ENCODE measurements at regions of chr14 and their contacts with region 1.

Region 1: GRCh38 chr14:55579724-55580469 is at the start of gene KTN1:
- DNase-seq: peak; percentile 77 to 90 (median 88)
- ATAC-seq: peak; percentile 94
- H3K4me3 ChIP-seq: peak within 1 kb of the TSS; percentile 93
- H3K4me3 Mint-ChIP-seq: peak within 1 kb of the TSS; percentile 93 to 98 (median 95)
- H3K27ac ChIP-seq: peak within 1 kb of the TSS; percentile 86
- H3K27ac Mint-ChIP-seq: peak within 1 kb of the TSS; percentile 90 to 97 (median 93)
- H3K4me1 ChIP-seq: peaks cover 20 to 34% of the 10 kb centered on the region in 2 donors
- H3K4me1 Mint-ChIP-seq: peaks cover 20 to 28% (median 27%) of the 10 kb centered on the region in 7 donors
- H3K27me3 ChIP-seq: no peaks in the 10 kb centered on the region
- H3K27me3 Mint-ChIP-seq: no peaks in the 10 kb centered on the region
- total RNA-seq, gene KTN1: 87.3 to 131 (median 105) TPM

Region 2: DNA sequence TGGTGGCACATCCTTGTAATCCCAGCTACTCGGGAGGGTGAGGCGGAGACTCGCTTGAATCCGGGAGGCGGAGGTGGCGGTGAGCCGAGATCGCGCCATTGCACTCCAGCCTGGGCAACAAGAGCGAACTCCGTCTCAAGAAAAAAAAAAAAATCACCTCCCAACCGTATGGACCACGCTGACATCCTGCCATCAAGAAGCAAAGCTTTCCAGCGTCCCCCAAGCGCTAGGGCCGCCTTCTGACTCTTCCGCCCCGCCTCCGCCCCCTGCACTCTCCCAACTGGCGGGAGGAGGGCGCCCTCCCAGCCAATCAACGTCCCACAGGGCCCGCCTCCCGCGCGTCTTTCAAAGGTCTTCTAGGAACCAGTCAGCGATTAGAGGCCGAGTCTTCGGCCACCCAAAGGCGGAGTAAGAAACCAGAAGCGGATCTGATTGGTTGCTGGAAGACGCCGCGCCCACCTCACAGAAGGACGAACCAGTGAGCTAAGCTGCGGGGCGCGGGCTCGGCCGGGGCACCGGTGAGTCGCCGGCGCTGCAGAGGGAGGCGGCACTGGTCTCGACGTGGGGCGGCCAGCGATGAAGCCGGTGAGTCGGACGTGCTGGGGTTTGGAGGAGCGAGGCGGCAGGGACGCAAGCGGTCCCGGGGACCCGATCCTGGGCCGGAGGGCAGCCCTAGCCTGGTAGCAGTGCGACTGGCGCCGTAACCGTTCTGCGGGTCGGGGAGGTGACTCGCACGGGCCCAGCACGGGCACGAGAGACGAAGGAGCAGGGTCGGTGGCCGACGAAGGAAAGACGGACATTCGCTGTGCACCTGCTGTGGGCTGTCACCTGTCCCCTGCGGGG is 1183.2 kb before region 1 on chr14 and contains the start of gene CDKN3:
- CTCF ChIA-PET with region 1: no interaction called
- POLR2A ChIA-PET with region 1: no interaction called
- intact Hi-C with region 1: loop called in 1 of 2 experiments (anchors 2 kb)
- DNase-seq: peak; percentile 91 to 96 (median 95)
- ATAC-seq: peak; percentile 98
- H3K4me3 ChIP-seq: peak within 1 kb of the TSS; percentile 85
- H3K4me3 Mint-ChIP-seq: peak within 1 kb of the TSS; percentile 81 to 96 (median 90)
- H3K27ac ChIP-seq: peak within 1 kb of the TSS; percentile 46
- H3K27ac Mint-ChIP-seq: peak within 1 kb of the TSS; percentile 24 to 93 (median 83)
- H3K4me1 ChIP-seq: peaks cover 0 to 9% of the 10 kb centered on the region in 2 donors
- H3K4me1 Mint-ChIP-seq: peaks cover 0 to 38% (median 12%) of the 10 kb centered on the region in 7 donors
- H3K27me3 ChIP-seq: no peaks in the 10 kb centered on the region
- H3K27me3 Mint-ChIP-seq: peaks cover 0 to 2% (median 0%) of the 10 kb centered on the region in 5 donors
- total RNA-seq, gene CDKN3: 0.93 to 48.1 (median 3.0) TPM

Region 3: DNA sequence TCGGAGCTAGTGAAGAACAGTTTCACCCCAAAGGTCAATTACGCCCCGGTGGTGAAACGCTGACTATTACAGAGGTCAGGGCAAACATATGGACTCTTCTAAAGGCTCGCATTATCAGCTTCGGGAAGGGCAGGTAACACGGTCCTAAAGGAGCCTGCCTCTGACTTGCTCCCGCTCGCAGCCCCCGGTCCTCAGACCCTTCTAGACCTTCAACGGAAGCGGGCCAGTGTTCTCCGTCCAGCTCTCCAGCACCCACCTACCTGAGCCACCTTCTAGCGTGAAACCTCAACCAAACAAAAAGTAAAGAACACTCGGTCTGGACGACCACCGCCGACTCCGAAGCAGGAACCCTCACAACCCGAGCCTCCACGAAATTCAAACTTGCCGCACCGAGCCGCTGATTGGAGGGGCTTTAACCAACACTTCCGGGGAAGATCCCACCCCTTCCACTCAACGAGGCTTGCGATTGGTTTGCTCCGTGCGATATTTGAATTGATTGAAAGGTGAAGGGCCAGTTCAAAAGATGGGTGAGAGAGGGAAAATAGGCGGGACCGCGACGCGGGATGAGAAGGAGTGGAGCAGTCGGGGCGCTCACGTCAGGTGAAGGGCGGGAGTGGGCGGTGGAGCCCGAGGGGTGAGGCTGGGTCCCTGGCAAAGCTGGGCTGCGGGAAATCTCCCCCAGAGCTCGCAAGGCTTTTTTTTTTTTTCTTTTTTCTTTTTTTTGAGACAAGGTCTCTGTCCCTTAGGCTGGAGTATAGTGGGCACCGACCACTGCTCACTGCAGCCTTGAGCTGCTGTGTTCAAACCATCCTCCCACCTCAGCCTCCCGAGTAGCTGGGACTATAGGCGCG is 388.5 kb before region 1 on chr14 and contains the start of gene DLGAP5:
- CTCF ChIA-PET with region 1: no interaction called
- POLR2A ChIA-PET with region 1: no interaction called
- intact Hi-C with region 1: loop called (anchors 1 kb)
- DNase-seq: peak; percentile 59 to 90 (median 86)
- ATAC-seq: peak; percentile 98
- H3K4me3 ChIP-seq: peak within 1 kb of the TSS; percentile 84
- H3K4me3 Mint-ChIP-seq: peak within 1 kb of the TSS; percentile 88 to 97 (median 90)
- H3K27ac ChIP-seq: peak within 1 kb of the TSS; percentile 58
- H3K27ac Mint-ChIP-seq: peak within 1 kb of the TSS; percentile 46 to 92 (median 68)
- H3K4me1 ChIP-seq: peaks cover 7 to 10% of the 10 kb centered on the region in 2 donors
- H3K4me1 Mint-ChIP-seq: peaks cover 5 to 42% (median 18%) of the 10 kb centered on the region in 7 donors
- H3K27me3 ChIP-seq: no peaks in the 10 kb centered on the region
- H3K27me3 Mint-ChIP-seq: peaks cover 0 to 4% (median 0%) of the 10 kb centered on the region in 5 donors
- total RNA-seq, gene DLGAP5: 0.49 to 46.7 TPM in 2 of 5 experiments, not detected in the others

Region 4: DNA sequence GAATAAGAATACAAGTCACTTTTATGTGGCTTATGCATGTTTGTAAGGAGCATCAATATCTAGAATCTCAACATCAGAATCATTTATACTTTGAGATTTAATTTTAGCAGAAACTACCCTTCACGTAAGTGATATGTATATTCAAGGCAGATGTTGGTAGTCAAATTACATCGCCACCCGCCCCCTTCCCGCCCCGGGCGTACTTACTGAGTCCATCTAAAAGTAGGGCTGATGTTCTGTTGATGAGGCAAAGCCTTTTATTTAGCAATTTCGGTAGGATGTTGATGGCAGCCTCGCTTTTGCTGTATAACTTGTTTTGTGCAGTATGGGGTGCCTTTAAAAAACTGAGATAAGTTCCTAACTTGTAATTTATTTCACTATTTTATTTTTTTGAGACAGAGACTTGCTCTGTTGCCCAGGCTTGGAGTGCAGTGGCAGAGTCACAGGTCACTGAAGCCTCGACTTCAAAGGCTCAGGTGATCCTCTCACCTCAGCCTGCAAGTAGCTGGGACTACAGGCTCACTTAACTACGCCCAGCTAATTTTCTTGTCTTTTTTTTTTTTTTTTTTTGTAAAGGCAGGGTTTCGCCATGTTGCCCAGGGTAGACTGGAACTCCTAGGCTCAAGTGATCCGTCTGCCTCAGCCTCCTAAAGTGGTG is 30.9 kb after region 1 on chr14:
- CTCF ChIA-PET with region 1: no interaction called
- POLR2A ChIA-PET with region 1: no interaction called
- intact Hi-C with region 1: loop called in 1 of 2 experiments (anchors 5 kb)
- DNase-seq: no peak
- ATAC-seq: no peak
- H3K4me3 ChIP-seq: no peak overlapping the region
- H3K4me3 Mint-ChIP-seq: no peak overlapping the region
- H3K27ac ChIP-seq: no peak overlapping the region
- H3K27ac Mint-ChIP-seq: peak overlapping the region in 1 of 9 donors; percentile 10
- H3K4me1 ChIP-seq: no peaks in the 10 kb centered on the region
- H3K4me1 Mint-ChIP-seq: peaks cover 5 to 70% (median 59%) of the 10 kb centered on the region in 7 donors
- H3K27me3 ChIP-seq: no peaks in the 10 kb centered on the region
- H3K27me3 Mint-ChIP-seq: no peaks in the 10 kb centered on the region

Region 5: DNA sequence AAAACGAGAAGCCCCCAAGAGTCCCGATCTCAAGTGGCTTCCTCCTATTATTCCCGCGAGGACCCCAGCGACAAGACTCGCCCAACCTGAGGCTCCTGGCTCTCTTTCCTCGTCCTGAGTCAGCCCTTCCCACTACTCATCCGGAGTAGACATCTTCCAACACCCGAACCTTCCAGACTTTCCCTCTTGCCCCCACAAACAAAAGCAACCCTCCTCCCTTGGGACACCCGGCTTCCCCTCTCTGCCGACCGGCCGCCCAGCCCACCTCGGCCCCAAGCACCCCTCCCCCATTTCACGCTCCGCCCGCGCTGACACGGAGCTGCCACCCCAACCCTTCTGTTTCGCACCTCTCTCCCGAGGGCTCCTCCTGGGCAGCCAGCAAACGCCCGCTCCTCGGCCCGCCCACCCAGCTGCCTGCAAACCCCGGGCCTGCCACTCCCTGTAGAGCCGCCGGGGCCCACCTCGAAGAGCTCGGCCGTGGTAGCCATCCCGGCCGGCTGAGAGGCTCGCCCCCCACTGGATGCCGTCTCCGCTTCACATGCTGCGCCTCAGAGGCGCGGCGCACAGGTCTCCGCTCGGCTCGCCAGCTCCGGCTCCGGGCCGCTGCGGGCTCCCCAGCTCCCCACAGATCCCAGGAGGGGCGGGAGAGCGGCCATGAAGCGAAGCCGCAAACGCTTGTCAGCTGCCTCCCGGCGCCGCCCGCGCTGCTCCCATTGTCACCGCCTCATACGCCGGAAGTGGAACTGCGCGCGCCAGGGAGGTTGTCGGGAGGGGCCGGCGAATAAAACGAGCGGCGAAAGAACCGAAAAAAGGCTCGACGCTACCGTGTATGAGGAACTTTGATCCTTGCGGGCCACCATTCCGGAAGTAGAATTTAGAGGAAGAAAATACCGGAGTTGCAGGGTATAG is 1688.5 kb after region 1 on chr14 and contains the starts of genes AP5M1 and EXOC5:
- CTCF ChIA-PET with region 1: no interaction called
- POLR2A ChIA-PET with region 1: no interaction called
- intact Hi-C with region 1: loop called (anchors 2 kb)
- DNase-seq: peak; percentile 78 to 95 (median 93)
- ATAC-seq: peak; percentile 89
- H3K4me3 ChIP-seq: peak within 1 kb of the TSS; percentile 89
- H3K4me3 Mint-ChIP-seq: peak within 1 kb of the TSS; percentile 97 to 100 (median 99)
- H3K27ac ChIP-seq: peak within 1 kb of the TSS; percentile 91
- H3K27ac Mint-ChIP-seq: peak within 1 kb of the TSS; percentile 98 to 100 (median 99)
- H3K4me1 ChIP-seq: peaks cover 29 to 34% of the 10 kb centered on the region in 2 donors
- H3K4me1 Mint-ChIP-seq: peaks cover 41 to 93% (median 76%) of the 10 kb centered on the region in 7 donors
- H3K27me3 ChIP-seq: no peaks in the 10 kb centered on the region
- H3K27me3 Mint-ChIP-seq: no peaks in the 10 kb centered on the region
- total RNA-seq, gene AP5M1: 42.3 to 62.8 (median 52.1) TPM
- total RNA-seq, gene EXOC5: 27.3 to 71.6 (median 42.2) TPM

Measured in naive thymus-derived CD4-positive, alpha-beta T cell (primary cell).